ENCODE measurements at regions of chr15 and their contacts with region 1.

Region 1: DNA sequence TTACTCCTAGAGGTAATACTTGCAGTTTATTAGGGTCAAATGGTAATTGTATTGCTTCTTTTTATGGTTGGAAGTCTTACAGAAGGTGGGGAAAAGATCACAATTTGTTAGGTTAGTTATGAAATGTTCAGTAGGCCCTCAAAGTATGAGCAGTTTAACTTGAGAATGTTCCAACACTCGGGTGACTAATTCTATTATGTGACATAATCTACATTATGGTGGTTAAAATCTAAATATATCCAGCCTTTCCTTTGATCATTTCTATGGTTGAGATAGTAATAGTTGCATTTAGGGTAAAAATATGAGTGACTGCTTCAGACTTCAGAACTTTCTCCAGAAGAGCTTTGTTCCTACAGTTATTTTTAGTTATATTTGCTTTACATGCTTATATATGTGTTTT is 19.6 kb upstream of the FBXO22 start:
- DNase-seq: no peak
- H3K4me3 ChIP-seq: no peak overlapping the region
- H3K27ac ChIP-seq: no peak overlapping the region
- H3K4me1 ChIP-seq: no peaks in the 10 kb centered on the region
- H3K27me3 ChIP-seq: no peaks in the 10 kb centered on the region
- CTCF ChIP-seq: no peak
- EP300 ChIP-seq: no peak
- POLR2A ChIP-seq: no peak
- RAD21 ChIP-seq: no peak

Region 2: GRCh38 chr15:75758071-75758872 is 125.8 kb before region 1 on chr15:
- CTCF ChIA-PET with region 1: no interaction called
- POLR2A ChIA-PET with region 1: no interaction called
- DNase-seq: peak; percentile 77 to 88
- H3K4me3 ChIP-seq: peak overlapping the region; percentile 22 to 60 (median 32); a peak in 5 of 8 replicates
- H3K27ac ChIP-seq: no peak overlapping the region; the same call in 1 of the 2 replicates
- H3K4me1 ChIP-seq: peaks cover 0 to 6% (median 2%) of the 10 kb centered on the region in 4 experiments; a peak in 2 of 7 replicates
- H3K27me3 ChIP-seq: no peaks in the 10 kb centered on the region
- CTCF ChIP-seq: peak in 2 of 3 experiments; percentile 24 to 25; a peak in 2 of 4 replicates
- EP300 ChIP-seq: no peak
- POLR2A ChIP-seq: peak in 1 of 2 experiments; percentile 75; a peak in 2 of 3 replicates
- RAD21 ChIP-seq: 0 out of 4 replicates have a peak, but pooled peaks of 1 of the 2 experiments have one; percentile 4

Region 3: GRCh38 chr15:75823860-75824613 is 60.0 kb before region 1 on chr15:
- CTCF ChIA-PET with region 1: interaction called, 11 read pairs
- POLR2A ChIA-PET with region 1: no interaction called
- DNase-seq: peak in 1 of 2 experiments; percentile 69
- H3K4me3 ChIP-seq: peak overlapping the region in 1 of 4 experiments; percentile 24; a peak in 1 of 8 replicates
- H3K27ac ChIP-seq: peak overlapping the region; percentile 76
- H3K4me1 ChIP-seq: peaks cover 5 to 14% (median 7%) of the 10 kb centered on the region in 4 experiments
- H3K27me3 ChIP-seq: no peaks in the 10 kb centered on the region
- CTCF ChIP-seq: no peak
- EP300 ChIP-seq: peak in 1 of 2 experiments; percentile 55; a peak in 1 of 3 replicates
- POLR2A ChIP-seq: peak; percentile 18 to 49; a peak in 2 of 3 replicates
- RAD21 ChIP-seq: no peak; a peak in 1 of 4 replicates

Region 4: DNA sequence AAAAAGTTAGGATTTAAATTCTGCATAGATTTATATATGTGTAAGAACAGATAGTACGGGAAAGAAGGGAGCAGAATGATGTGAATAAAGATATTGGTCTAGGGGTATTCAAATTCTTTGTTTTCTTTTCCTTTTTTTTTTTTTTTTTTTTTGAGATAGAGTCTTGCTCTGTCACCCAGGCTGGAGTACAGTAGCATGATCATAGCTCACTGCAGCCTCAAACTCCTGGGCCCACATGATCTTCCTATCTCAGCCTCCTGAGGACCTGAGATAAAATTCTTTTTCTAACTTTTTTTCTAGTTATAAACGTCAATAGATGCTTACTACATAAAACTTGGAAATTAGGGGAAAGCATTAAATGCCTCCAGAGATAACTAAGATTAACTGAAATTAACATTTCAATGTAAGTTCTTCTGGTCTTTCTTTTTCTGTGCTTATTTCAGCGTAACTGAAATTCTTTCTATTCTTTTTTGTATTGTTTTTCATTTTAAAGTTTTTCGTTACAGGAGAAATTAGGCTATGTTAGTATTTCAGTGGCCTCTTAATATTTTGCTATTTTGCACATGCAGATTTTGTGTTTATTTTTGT is 11.5 kb before region 1 on chr15:
- CTCF ChIA-PET with region 1: interaction called, 10 read pairs
- POLR2A ChIA-PET with region 1: interaction called, 3 read pairs
- DNase-seq: no peak
- H3K4me3 ChIP-seq: no peak overlapping the region
- H3K27ac ChIP-seq: no peak overlapping the region
- H3K4me1 ChIP-seq: peaks cover 0 to 8% (median 5%) of the 10 kb centered on the region in 4 experiments; a peak in 3 of 7 replicates
- H3K27me3 ChIP-seq: no peaks in the 10 kb centered on the region
- CTCF ChIP-seq: no peak
- EP300 ChIP-seq: no peak
- POLR2A ChIP-seq: no peak
- RAD21 ChIP-seq: no peak

Region 5: GRCh38 chr15:75903331-75904239 is 19.5 kb after region 1 on chr15 and contains the start of gene FBXO22:
- CTCF ChIA-PET with region 1: interaction called, 13 read pairs
- POLR2A ChIA-PET with region 1: interaction called, 10 read pairs
- DNase-seq: peak; percentile 71 to 93
- H3K4me3 ChIP-seq: peak within 1 kb of the TSS; percentile 86 to 93 (median 90)
- H3K27ac ChIP-seq: peak within 1 kb of the TSS; percentile 96
- H3K4me1 ChIP-seq: peaks cover 8 to 22% (median 13%) of the 10 kb centered on the region in 4 experiments; a peak in 5 of 7 replicates
- H3K27me3 ChIP-seq: no peaks in the 10 kb centered on the region
- CTCF ChIP-seq: no peak
- EP300 ChIP-seq: peak in 1 of 2 experiments; percentile 41; a peak in 1 of 3 replicates
- POLR2A ChIP-seq: peak; percentile 87 to 89
- RAD21 ChIP-seq: peak in 1 of 2 experiments; percentile 3; a peak in 2 of 4 replicates
- total RNA-seq, gene FBXO22: 66.8 and 67.3 TPM in 2 replicates

Measured in H1 (cell line).